Activated CD4-positive, alpha-beta T cell treated with anti-CD3 and anti-CD28 coated beads, Interleukin-2, amount 10 ng/mL, durations not matched to agents 24 days and 14 days (primary cell): ENCODE measurements at regions of chr11 and their contacts with region 1.

Region 1: GRCh38 chr11:48109046-48109666 is 107.5 kb upstream of the OR4B1 start:
- DNase-seq: no peak
- H3K4me3 Mint-ChIP-seq: peak overlapping the region; percentile 66
- H3K27ac Mint-ChIP-seq: peak overlapping the region; percentile 83
- H3K4me1 Mint-ChIP-seq: peaks cover 53% of the 10 kb centered on the region
- H3K27me3 Mint-ChIP-seq: no peaks in the 10 kb centered on the region

Region 2: GRCh38 chr11:47863189-47863892 is 245.8 kb before region 1 on chr11:
- intact Hi-C with region 1: loop called (anchors 5 kb)
- DNase-seq: peak; percentile 70
- H3K4me3 Mint-ChIP-seq: peak overlapping the region; percentile 13
- H3K27ac Mint-ChIP-seq: peak overlapping the region; percentile 14
- H3K4me1 Mint-ChIP-seq: peaks cover 26% of the 10 kb centered on the region
- H3K27me3 Mint-ChIP-seq: no peaks in the 10 kb centered on the region

Region 3: DNA sequence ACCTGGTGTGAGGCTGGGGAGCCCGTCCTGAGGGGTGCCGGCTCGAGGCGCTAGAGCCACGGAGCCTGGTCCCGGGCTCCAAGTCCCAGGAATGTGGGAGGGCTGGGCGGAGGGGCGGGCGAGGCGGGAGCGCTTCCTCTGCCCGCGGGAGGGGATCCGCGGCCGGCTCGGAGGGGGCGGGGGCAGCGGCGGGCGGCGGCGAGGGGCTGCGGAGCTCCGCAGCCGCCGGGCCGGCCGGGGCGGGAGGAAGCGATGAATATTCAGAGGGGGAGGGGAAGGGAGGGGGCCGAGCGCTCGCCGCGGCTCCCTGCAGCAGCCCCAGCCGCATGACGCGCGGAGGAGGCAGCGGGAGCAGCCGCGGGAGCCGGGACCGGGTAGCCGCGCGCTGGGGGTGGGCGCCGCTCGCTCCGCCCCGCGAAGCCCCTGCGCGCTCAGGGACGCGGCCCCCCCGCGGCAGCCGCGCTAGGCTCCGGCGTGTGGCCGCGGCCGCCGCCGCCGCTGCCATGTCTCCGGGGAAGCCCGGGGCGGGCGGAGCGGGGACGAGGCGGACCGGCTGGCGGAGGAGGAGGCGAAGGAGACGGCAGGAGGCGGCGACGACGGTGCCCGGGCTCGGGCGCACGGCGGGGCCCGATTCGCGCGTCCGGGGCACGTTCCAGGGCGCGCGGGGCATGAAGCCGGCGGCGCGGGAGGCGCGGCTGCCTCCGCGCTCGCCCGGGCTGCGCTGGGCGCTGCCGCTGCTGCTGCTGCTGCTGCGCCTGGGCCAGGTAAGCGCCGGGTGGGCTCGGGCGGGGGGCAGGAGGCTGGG is 128.7 kb before region 1 on chr11 and contains the start of gene PTPRJ:
- intact Hi-C with region 1: loop called (anchors 1 kb)
- DNase-seq: peak; percentile 90
- H3K4me3 Mint-ChIP-seq: peak within 1 kb of the TSS; percentile 87
- H3K27ac Mint-ChIP-seq: peak within 1 kb of the TSS; percentile 72
- H3K4me1 Mint-ChIP-seq: peaks cover 24% of the 10 kb centered on the region
- H3K27me3 Mint-ChIP-seq: peaks cover 14% of the 10 kb centered on the region
- total RNA-seq, gene PTPRJ: 51.3 and 52.2 TPM in 2 replicates

Region 4: GRCh38 chr11:48034926-48035871 is 74.0 kb before region 1 on chr11:
- intact Hi-C with region 1: no loop called
- DNase-seq: no peak
- H3K4me3 Mint-ChIP-seq: peak overlapping the region; percentile 52
- H3K27ac Mint-ChIP-seq: peak overlapping the region; percentile 69
- H3K4me1 Mint-ChIP-seq: peaks cover 67% of the 10 kb centered on the region
- H3K27me3 Mint-ChIP-seq: no peaks in the 10 kb centered on the region

Region 5: DNA sequence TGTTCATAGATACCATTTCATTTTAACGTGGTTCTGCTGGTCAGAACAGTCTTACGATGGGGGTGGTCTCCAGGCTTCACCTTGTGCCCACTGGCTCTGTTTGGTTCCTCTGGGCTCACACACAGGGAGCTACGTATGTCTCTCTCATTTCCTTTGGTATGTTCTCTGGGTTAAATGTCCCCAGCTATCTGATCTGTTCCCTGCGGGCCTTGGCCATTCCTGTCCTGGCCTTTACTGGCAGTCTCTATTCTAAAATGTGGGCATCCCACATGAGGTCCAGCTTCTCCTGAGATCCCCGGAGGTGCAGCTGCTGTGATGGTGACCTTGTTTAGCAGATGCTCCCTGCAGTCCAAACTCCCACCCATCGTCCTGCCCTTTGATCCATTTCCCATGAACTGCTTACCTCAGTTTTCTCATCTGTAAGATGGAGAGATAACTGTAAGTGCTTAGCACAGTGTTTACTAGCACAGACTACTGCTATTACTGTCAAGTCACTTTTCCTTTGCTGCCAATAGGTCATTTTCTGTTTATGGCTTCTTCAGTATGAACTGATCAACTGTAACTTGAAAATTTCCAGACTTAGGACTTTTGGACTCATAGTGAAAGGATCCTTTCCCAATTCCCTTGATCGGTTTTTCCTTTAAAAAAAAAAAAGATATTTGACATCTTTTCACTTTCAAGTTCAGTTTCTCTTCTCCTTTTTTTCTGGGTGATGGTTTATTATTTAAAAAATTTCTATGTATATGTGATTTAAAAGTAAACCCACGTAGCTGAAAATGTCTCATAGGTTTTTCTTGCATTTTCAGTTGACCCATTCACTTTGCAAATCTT is 35.9 kb before region 1 on chr11:
- intact Hi-C with region 1: loop called (anchors 5 kb)
- DNase-seq: no peak
- H3K4me3 Mint-ChIP-seq: peak overlapping the region; percentile 40
- H3K27ac Mint-ChIP-seq: peak overlapping the region; percentile 92
- H3K4me1 Mint-ChIP-seq: peaks cover 31% of the 10 kb centered on the region
- H3K27me3 Mint-ChIP-seq: no peaks in the 10 kb centered on the region